ENCODE measurements at regions of chr1 and their contacts with region 1.

Region 1: DNA sequence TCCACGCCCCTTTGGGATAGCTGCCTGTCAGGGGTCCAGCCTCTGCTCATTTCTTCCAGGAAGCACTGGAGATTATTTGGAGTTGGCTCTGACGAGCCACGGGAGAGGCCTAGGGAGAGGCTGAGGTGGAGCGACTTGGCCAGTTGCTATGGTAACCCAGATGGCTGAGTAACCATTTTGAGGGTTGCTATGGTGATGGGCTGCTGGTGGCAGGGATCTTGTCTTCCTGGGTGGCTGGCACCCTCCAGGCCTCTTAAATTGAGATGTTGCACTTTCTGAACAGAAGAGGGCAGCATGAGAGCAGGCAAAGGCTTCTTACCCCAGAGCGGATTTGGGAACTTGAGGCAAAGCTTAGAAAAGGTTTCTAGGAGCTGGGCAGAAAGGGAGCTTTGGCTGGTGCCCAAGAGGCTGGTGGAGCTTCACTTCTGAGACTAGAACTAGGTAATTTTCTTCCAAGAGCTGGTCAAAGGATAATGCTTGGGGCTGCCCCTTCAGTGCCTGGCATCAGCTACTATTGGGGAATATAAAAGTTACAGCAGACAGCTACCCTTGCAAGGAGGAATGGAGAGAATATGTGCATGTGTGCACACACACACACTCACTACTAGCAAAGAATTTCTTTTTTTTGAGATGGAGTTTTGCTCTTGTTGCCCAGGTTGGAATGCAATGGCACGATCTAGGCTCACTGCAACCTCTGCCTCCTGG is 72.5 kb downstream of the NDUFS5 start:
- DNase-seq: peak; percentile 18 to 87 (median 61)
- ATAC-seq: peak; percentile 77
- H3K4me3 ChIP-seq: no peak overlapping the region
- H3K4me3 Mint-ChIP-seq: no peak overlapping the region
- H3K27ac ChIP-seq: no peak overlapping the region
- H3K27ac Mint-ChIP-seq: no peak overlapping the region
- H3K4me1 ChIP-seq: peaks cover 14% of the 10 kb centered on the region
- H3K4me1 Mint-ChIP-seq: peaks cover 21% of the 10 kb centered on the region
- H3K27me3 ChIP-seq: no peaks in the 10 kb centered on the region
- H3K27me3 Mint-ChIP-seq: no peaks in the 10 kb centered on the region
- CTCF ChIP-seq: peak; percentile 54

Region 2: DNA sequence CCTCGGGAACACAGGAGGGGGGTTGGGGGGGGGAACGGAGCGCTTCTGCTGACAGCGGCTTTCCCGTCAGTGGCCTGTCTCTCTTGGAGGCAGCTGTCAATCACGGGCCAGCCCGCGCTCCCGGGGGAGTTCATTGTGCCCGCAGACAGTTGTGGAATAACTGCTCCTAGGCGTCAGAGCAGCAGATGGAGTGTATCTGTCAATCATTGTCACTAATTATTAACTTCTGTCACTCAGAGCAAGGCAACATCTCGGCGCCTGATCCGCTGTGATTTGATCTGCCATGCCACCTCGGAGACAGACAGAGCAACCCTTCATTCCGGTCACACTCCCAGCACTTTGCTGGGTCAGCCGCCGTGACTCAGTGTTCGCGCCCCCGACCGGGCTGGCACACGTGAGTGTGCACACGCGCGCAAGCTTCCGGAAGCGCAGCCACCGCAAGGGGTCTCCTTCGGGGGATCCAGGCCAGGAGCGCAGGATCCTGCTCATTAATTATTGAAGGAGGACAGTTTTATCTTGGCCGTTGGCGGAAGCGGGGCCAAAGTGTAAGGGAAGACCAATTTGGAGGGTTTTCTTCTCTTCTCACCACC is 315.0 kb before region 1 on chr1:
- CTCF ChIA-PET with region 1: no interaction called
- POLR2A ChIA-PET with region 1: no interaction called
- intact Hi-C with region 1: no loop called
- DNase-seq: no peak
- ATAC-seq: no peak
- H3K4me3 ChIP-seq: no peak overlapping the region
- H3K4me3 Mint-ChIP-seq: no peak overlapping the region
- H3K27ac ChIP-seq: no peak overlapping the region
- H3K27ac Mint-ChIP-seq: no peak overlapping the region
- H3K4me1 ChIP-seq: no peaks in the 10 kb centered on the region
- H3K4me1 Mint-ChIP-seq: no peaks in the 10 kb centered on the region
- H3K27me3 ChIP-seq: no peaks in the 10 kb centered on the region
- H3K27me3 Mint-ChIP-seq: peaks cover 54% of the 10 kb centered on the region
- CTCF ChIP-seq: no peak

Region 3: GRCh38 chr1:38990738-38991639 is 107.7 kb before region 1 on chr1 and contains the start of gene AKIRIN1:
- CTCF ChIA-PET with region 1: interaction called, 4 read pairs
- POLR2A ChIA-PET with region 1: no interaction called
- intact Hi-C with region 1: loop called in 1 of 2 experiments (anchors 10 kb)
- DNase-seq: peak; percentile 81 to 98 (median 94)
- ATAC-seq: peak; percentile 90
- H3K4me3 ChIP-seq: peak within 1 kb of the TSS; percentile 53 to 93
- H3K4me3 Mint-ChIP-seq: peak within 1 kb of the TSS; percentile 87
- H3K27ac ChIP-seq: peak within 1 kb of the TSS; percentile 82 to 84
- H3K27ac Mint-ChIP-seq: peak within 1 kb of the TSS; percentile 89
- H3K4me1 ChIP-seq: peaks cover 40% of the 10 kb centered on the region
- H3K4me1 Mint-ChIP-seq: peaks cover 38% of the 10 kb centered on the region
- H3K27me3 ChIP-seq: no peaks in the 10 kb centered on the region
- H3K27me3 Mint-ChIP-seq: no peaks in the 10 kb centered on the region
- CTCF ChIP-seq: no peak
- total RNA-seq, gene AKIRIN1: 122 to 123 TPM

Region 4: DNA sequence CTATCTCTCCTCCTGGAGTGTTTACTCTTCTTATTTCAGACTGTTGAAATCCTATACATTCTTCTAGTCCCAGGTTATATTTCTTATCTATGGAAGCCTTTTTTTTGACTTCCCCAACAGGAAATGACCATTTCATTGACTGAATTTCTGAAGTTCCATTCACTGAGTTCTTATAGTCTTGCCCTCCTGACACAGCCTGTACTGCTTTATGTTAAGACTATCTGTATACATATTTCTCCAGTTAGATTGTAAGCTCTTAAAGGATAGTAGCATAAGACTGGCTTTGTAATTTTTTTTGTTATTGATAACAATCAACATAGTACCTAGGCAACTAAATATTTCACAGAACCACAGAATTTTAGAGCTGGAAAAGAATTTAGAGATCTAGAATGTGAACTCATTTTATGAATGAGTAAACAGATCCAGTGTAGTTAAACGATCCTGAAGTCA is 90.9 kb after region 1 on chr1:
- CTCF ChIA-PET with region 1: interaction called, 84 read pairs
- POLR2A ChIA-PET with region 1: no interaction called
- intact Hi-C with region 1: loop called in 1 of 2 experiments (anchors 1 kb)
- DNase-seq: no peak
- ATAC-seq: no peak
- H3K4me3 ChIP-seq: no peak overlapping the region
- H3K4me3 Mint-ChIP-seq: no peak overlapping the region
- H3K27ac ChIP-seq: no peak overlapping the region
- H3K27ac Mint-ChIP-seq: peak overlapping the region; percentile 16
- H3K4me1 ChIP-seq: peaks cover 41% of the 10 kb centered on the region
- H3K4me1 Mint-ChIP-seq: peaks cover 52% of the 10 kb centered on the region
- H3K27me3 ChIP-seq: no peaks in the 10 kb centered on the region
- H3K27me3 Mint-ChIP-seq: no peaks in the 10 kb centered on the region
- CTCF ChIP-seq: no peak

Region 5: DNA sequence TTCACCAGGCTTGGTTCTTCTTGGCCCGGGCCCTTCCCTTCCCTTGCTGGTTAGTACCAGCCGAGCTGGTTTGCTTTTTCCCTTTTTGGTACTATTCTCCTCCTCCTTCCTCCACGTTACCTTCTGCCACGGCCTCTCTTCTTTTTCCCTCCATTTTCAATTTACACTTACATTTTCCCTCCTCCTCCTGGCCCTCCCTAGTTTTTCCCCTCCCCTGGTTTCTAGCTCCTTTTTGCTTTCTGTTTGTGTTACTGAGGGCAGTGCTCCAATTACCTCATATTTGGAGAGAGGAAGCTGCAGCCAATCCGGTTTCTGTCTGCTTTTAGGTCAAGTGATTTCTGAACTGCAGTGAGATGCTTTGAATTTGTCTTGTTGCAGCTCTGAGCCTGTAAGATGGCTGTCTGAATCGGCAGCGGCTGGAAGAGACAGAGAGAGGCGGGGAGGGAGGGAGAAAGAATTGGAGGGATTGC is 169.4 kb after region 1 on chr1:
- CTCF ChIA-PET with region 1: interaction called, 10 read pairs
- POLR2A ChIA-PET with region 1: no interaction called
- intact Hi-C with region 1: no loop called
- DNase-seq: peak in 3 of 9 experiments; percentile 16 to 30 (median 21)
- ATAC-seq: peak; percentile 54
- H3K4me3 ChIP-seq: no peak overlapping the region
- H3K4me3 Mint-ChIP-seq: peak overlapping the region; percentile 61
- H3K27ac ChIP-seq: no peak overlapping the region
- H3K27ac Mint-ChIP-seq: peak overlapping the region; percentile 60
- H3K4me1 ChIP-seq: peaks cover 22% of the 10 kb centered on the region
- H3K4me1 Mint-ChIP-seq: peaks cover 82% of the 10 kb centered on the region
- H3K27me3 ChIP-seq: no peaks in the 10 kb centered on the region
- H3K27me3 Mint-ChIP-seq: no peaks in the 10 kb centered on the region
- CTCF ChIP-seq: no peak

Region 6: DNA sequence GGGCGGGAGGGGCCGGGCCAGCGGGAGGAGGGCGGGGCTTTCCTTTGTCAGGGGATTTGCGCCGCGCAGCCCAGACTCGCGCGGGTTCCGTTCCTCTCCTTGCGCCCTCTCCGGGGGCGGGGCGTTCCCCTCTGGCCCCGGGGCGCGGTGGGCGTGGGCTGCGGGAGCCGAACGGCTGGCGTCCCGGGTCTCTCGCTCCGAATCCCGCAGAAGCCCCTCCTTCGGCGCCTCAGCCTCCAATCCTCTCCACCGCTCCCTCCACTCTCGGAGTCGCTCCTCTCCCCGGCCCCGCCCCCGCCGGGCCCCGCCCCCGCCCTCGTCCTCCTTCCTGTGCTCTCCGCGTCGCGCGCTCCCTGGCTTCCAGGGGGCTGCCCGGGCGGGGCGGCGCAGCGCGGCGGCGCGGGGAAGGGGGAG is 309.9 kb after region 1 on chr1:
- CTCF ChIA-PET with region 1: interaction called, 26 read pairs
- POLR2A ChIA-PET with region 1: interaction called, 7 read pairs
- intact Hi-C with region 1: loop called (anchors 1 kb)
- DNase-seq: peak; percentile 50 to 91 (median 83)
- ATAC-seq: peak; percentile 87
- H3K4me3 ChIP-seq: peak overlapping the region; percentile 50 to 55
- H3K4me3 Mint-ChIP-seq: peak overlapping the region; percentile 88
- H3K27ac ChIP-seq: peak overlapping the region in 1 of 2 experiments; percentile 38
- H3K27ac Mint-ChIP-seq: no peak overlapping the region
- H3K4me1 ChIP-seq: peaks cover 35% of the 10 kb centered on the region
- H3K4me1 Mint-ChIP-seq: peaks cover 45% of the 10 kb centered on the region
- H3K27me3 ChIP-seq: no peaks in the 10 kb centered on the region
- H3K27me3 Mint-ChIP-seq: no peaks in the 10 kb centered on the region
- CTCF ChIP-seq: no peak

Region 7: DNA sequence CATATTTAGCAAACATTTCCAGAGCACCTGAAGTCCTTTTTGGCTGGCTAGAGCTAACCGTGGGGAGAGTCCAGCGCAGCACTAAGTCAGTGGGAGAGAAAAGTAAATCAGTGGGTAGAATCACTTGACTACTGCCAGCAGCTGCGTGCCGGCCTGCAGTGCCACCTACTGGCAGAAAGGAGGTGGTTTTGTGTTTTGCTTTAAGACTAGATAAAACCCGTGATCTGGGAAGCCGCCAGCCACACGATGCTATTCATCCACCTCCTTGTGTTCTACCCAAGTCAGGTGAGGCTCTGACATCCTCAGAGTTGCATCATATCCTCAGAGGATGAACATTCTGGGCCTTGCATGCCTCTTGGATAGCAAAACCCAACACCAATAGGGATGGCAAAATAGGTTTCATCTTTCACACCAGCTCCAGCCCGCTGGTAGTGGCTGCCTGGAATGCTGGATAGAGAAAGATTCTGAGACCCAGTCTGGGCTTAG is 554.9 kb after region 1 on chr1:
- CTCF ChIA-PET with region 1: interaction called, 3 read pairs
- POLR2A ChIA-PET with region 1: no interaction called
- intact Hi-C with region 1: loop called (anchors 1 to 5 kb)
- DNase-seq: peak; percentile 55 to 81 (median 73)
- ATAC-seq: peak; percentile 78
- H3K4me3 ChIP-seq: no peak overlapping the region
- H3K4me3 Mint-ChIP-seq: no peak overlapping the region
- H3K27ac ChIP-seq: no peak overlapping the region
- H3K27ac Mint-ChIP-seq: no peak overlapping the region
- H3K4me1 ChIP-seq: no peaks in the 10 kb centered on the region
- H3K4me1 Mint-ChIP-seq: peaks cover 6% of the 10 kb centered on the region
- H3K27me3 ChIP-seq: no peaks in the 10 kb centered on the region
- H3K27me3 Mint-ChIP-seq: peaks cover 6% of the 10 kb centered on the region
- CTCF ChIP-seq: peak; percentile 90

Measured in CD8-positive, alpha-beta T cell (primary cell).